PC-9 (cell line): ENCODE measurements at regions of chr17 and their contacts with region 1.

Region 1: DNA sequence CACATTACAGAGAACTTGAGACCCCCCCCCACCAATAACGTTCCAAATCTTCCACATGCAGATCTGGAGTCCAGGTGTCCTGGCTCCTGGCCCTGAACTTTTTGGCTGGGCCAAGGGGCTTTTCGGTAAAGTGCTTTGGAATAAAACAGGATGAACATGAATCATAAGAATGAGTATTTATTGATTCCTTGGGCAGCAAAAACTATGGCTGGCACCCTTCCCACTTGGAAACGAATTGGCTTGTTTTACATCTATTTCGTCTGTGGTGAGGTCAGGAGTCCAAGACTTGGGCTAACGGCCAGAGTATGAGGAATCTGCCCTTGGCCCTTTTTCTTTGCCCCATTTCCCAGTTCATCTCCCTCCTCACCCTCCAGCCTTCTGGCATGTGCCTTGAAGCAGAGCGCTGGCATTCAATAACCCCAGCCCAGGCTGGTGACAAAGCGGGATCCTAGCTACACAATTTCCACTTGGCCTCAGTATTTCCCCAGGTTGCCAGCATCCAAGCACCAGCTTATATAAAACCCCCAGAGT is 4.1 kb upstream of the UBTF start:
- DNase-seq: no peak
- H3K4me3 ChIP-seq: no peak overlapping the region
- H3K27ac ChIP-seq: no peak overlapping the region
- H3K4me1 ChIP-seq: peaks cover 8% of the 10 kb centered on the region
- H3K27me3 ChIP-seq: no peaks in the 10 kb centered on the region
- CTCF ChIP-seq: no peak

Region 2: DNA sequence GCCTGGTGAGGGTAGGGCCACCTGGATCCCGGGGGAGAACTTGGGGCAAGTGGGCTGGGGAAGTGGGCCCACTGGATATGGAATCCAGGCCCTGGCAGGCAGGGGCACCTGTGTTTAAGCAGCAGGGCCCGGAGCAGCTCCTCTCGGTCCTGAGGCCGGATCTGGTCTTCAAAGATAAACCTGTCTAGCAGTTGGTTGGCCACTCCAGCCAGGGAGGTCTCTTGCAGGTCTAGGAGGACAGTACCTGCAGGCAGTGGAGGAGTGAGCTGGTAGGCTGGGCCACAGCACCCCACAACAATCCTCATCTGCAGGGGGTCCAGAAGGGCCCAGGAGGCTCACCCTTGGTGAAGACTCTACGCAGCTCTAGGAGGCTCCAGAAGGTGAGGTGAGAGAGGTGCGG is 36.7 kb after region 1 on chr17:
- CTCF ChIA-PET with region 1: no interaction called
- POLR2A ChIA-PET with region 1: no interaction called
- intact Hi-C with region 1: no loop called
- DNase-seq: no peak
- H3K4me3 ChIP-seq: no peak overlapping the region
- H3K27ac ChIP-seq: no peak overlapping the region
- H3K4me1 ChIP-seq: no peaks in the 10 kb centered on the region
- H3K27me3 ChIP-seq: peaks cover 24% of the 10 kb centered on the region
- CTCF ChIP-seq: no peak

Region 3: GRCh38 chr17:44350733-44351226 is 127.2 kb after region 1 on chr17:
- CTCF ChIA-PET with region 1: interaction called, 19 read pairs
- POLR2A ChIA-PET with region 1: no interaction called
- intact Hi-C with region 1: no loop called
- DNase-seq: peak in 1 of 2 experiments; percentile 61
- H3K4me3 ChIP-seq: no peak overlapping the region
- H3K27ac ChIP-seq: no peak overlapping the region
- H3K4me1 ChIP-seq: peaks cover 5% of the 10 kb centered on the region
- H3K27me3 ChIP-seq: no peaks in the 10 kb centered on the region
- CTCF ChIP-seq: peak; percentile 86